Keratinocyte (primary cell): ENCODE measurements at regions of chr19 and their contacts with region 1.

Region 1: GRCh38 chr19:11881151-11881800 is 6.3 kb upstream of the ZNF69 start:
- DNase-seq: no peak
- H3K4me3 ChIP-seq: no peak overlapping the region
- H3K27ac ChIP-seq: no peak overlapping the region
- H3K4me1 ChIP-seq: no peaks in the 10 kb centered on the region
- H3K27me3 ChIP-seq: no peaks in the 10 kb centered on the region
- CTCF ChIP-seq: peak; percentile 64 to 80 (median 77)

Region 2: GRCh38 chr19:11649941-11650340 is 231.3 kb before region 1 on chr19:
- dilution Hi-C with region 1: no loop called
- DNase-seq: no peak
- H3K4me3 ChIP-seq: no peak overlapping the region
- H3K27ac ChIP-seq: no peak overlapping the region
- H3K4me1 ChIP-seq: no peaks in the 10 kb centered on the region
- H3K27me3 ChIP-seq: no peaks in the 10 kb centered on the region
- CTCF ChIP-seq: no peak

Region 3: DNA sequence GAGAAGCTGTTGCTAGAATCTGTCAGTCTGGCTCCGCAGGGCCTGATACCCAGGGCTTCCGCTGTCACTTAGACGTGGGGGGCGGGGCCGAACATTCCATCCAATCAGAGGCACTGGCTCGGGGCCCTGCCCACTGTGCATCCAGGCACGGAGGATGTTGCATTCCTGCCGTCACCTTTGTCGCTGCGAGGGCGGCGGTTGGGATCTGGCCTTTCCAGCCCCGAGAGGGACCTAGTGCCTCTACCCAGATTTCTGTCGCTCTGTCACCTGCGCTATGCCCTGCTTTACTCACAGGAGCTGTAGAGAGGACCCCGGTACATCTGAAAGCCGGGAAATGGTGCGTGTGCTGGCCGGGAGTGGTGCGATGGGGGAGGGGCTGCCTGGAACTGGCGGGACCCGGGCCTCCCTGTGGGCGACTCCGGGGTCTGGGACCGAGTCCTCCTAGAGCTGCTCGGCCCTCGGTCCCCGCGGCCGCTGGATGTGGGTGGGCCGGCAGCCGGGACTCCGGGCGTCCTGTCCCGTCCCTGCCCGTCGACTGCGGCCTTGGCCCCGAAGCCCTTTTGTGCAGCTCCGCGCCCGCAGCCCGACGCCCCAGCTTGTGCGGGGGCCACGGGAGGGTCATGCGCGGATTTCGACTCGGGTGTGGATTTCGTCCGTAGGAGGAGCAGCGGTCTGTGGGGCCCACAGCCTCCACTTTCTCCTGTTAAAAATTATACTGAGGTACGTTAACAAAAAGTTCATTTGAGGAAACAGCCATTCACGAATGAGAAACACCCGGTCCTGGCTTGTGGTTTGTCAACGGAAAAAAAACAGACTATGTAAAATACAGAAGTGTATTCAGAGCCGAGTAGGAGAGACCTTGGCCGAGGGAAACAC is 32.4 kb before region 1 on chr19 and contains the start of gene ZNF439:
- dilution Hi-C with region 1: loop called (anchors 5 kb)
- DNase-seq: no peak
- H3K4me3 ChIP-seq: peak within 1 kb of the TSS; percentile 35 to 56 (median 51)
- H3K27ac ChIP-seq: no peak within 1 kb of the TSS
- H3K4me1 ChIP-seq: no peaks in the 10 kb centered on the region
- H3K27me3 ChIP-seq: peaks cover 10% of the 10 kb centered on the region
- CTCF ChIP-seq: no peak
- polyA plus RNA-seq, gene ZNF439: 0.52 to 0.86 TPM (median 0.71 TPM) in 3 replicates

Region 4: DNA sequence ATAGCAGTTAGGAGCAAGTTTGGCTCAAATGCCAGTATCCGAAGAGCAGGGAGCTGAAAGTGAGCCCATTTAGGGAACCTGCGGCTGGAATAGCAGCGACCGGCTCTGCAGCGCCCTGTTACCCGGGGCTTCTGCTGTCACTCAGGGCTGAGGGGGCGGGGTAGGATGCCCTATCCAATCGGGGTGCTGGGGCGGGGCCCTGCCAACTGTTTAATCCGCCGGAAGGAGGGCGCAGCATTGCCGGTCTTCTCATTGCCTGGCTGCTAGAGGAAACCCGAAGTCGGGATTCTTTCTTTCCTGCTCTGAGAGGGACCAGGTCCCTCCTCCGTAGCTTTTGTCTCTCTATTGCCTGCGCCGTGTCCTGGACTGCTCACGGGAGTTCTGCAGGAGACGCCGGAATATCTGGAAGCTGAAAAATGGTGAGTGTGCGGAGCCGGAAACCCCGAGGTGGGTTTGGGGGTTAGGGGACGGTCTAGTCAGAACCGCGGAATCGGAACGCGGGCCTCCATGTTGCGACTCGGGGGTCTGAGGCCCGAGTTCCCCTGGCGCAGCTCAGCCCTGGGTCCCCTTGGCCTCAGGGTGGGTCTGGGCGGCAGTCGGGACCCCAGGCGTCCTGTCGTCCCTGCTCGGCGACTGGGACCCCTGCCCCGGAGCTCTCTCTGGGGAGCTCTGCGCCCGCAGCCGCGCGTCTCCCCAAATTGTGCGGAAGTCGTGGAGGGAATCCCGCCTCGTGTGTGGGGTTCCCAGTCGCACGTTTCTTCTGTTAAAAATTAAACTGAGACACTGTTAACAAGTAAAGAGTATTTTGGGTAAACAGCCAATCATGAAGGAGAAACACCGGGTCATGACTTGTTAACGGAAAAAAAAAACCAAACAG is 106.4 kb after region 1 on chr19:
- dilution Hi-C with region 1: no loop called
- DNase-seq: no peak
- H3K4me3 ChIP-seq: peak overlapping the region; percentile 81 to 96 (median 81)
- H3K27ac ChIP-seq: peak overlapping the region; percentile 77
- H3K4me1 ChIP-seq: no peaks in the 10 kb centered on the region
- H3K27me3 ChIP-seq: no peaks in the 10 kb centered on the region
- CTCF ChIP-seq: no peak

Region 5: GRCh38 chr19:12789904-12790619 is 908.8 kb after region 1 on chr19:
- dilution Hi-C with region 1: no loop called
- DNase-seq: no peak
- H3K4me3 ChIP-seq: peak overlapping the region; percentile 73 to 95 (median 94)
- H3K27ac ChIP-seq: peak overlapping the region; percentile 98
- H3K4me1 ChIP-seq: peaks cover 47% of the 10 kb centered on the region
- H3K27me3 ChIP-seq: no peaks in the 10 kb centered on the region
- CTCF ChIP-seq: no peak